ENCODE measurements at regions of chr17 and their contacts with region 1.

Region 1: DNA sequence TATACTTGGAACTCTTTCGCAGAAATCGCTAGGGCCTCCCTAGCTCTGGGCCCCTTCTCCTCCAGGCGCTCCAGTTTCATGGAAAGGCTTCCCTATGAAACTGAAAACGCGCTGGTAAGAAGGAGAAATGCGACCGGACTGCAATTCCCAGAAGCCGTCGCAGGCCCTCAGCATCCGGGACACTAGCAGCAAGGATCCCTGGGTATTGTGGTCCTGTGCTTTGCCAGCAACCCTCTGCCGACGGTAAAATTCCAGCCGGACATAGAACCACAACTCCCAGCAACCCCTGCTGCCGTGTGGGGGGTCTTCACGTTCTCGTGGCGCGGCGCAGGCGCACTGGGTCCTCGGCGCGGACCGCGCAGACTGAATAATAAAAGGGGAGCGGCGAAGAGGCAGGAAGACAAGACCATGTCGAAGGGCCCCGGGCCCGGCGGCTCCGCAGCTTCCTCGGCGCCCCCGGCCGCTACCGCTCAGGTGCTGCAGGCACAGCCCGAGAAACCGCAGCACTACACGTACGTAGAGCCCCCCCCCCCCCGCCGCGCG is at the start of gene UNK:
- DNase-seq: peak; percentile 97 to 98
- H3K4me3 ChIP-seq: peak within 1 kb of the TSS; percentile 71 to 81 (median 77)
- H3K27ac ChIP-seq: peak within 1 kb of the TSS; percentile 99 to 100
- H3K4me1 ChIP-seq: peaks cover 3 to 13% of the 10 kb centered on the region in 2 donors
- H3K27me3 ChIP-seq: no peaks in the 10 kb centered on the region
- CTCF ChIP-seq: peak in 2 of 3 donors; percentile 21 to 34
- POLR2A ChIP-seq: peak; percentile 52
- total RNA-seq, gene UNK: 18.7 to 43.3 (median 28.5) TPM

Region 2: DNA sequence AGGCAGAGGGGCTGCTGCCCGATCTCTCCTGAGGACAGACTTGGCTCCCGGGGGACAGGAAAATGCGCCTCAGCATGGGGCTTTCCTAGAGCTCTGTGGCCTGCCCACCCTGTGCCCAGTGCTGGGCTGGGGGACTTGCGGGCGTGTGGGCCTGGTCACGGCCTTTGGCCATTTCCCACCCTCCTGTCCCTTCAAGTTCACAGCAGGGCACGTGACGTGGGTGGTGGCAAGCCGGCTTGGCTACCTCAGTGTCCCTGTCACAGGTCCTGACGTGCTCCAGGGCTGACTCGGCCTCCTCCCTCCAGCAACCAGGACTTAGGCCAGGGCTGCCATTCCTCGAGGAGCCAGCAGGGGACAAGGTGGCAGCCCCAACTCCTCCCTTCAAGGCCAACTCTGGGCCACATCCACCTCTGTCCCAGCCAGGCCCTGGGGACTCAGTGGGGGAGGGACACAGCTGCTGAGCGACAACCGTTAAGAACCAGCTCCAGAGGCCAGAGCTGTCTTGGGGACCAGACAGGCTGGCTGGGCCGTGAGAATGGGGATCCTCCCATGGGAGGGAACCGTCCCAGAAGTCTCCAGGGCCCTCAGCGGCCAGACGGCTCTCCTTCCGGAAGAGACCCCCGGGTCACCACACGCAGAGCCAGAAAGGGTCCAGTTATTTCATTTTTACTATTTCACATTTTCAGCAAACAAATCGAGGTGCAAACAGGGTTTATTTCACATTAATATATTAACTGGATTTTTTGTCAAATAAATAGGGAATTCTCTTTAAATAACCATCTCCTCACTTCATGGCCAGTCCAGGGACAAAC is 60.7 kb after region 1 on chr17:
- intact Hi-C with region 1: loop called (anchors 10 kb)
- DNase-seq: peak; percentile 92 to 95
- H3K4me3 ChIP-seq: peak overlapping the region in 2 of 3 donors; percentile 33 to 46
- H3K27ac ChIP-seq: peak overlapping the region; percentile 94 to 95
- H3K4me1 ChIP-seq: peaks cover 16 to 50% of the 10 kb centered on the region in 2 donors
- H3K27me3 ChIP-seq: no peaks in the 10 kb centered on the region
- CTCF ChIP-seq: peak; percentile 97 to 99 (median 97)
- POLR2A ChIP-seq: no peak